ENCODE measurements at regions of chr6 and their contacts with region 1.

Region 1: DNA sequence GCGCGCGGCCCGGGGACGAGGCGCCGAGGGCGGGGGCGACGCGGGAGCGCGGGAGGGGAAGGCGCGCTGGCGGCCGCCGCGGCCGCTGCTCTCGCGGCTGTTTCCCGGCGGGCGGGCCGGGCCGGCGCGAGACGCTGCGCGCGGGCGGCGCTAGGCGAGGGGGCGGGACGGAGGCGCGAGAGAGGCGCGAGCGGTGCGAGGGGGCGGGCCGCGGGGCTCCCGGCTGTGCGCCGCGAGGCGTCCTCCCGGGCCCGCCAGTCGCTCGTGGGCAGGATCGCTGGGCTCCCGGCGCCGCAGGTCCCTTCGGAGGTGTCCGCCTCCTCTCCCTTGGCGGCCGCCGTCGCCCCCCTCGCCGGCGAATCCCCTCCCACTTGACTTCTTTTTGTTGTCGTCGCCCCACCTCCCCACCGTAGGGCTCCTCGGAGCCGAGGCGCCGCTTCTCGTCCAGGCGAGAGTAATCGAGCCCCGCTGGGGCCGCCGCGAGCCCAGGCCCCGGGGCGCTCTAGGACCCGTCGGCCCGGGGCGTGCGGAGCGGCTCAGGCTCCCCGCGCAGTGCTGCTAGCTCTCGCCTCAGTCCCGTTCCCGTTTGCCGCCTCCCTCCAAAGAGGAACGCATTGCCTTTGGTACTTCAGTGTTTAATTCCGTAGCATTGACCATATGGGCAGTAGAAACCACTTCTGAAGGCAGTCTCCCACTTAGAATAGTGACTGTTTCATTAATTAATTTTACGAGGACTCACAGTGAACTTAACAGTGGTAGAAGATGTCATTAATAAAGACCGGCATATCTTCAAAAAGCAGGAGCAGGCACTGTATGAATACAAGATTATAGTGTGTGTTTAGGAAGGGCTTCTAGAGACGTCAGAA is at the start of gene RANBP9:
- DNase-seq: peak; percentile 90
- H3K4me3 Mint-ChIP-seq: peak within 1 kb of the TSS; percentile 89
- H3K27ac Mint-ChIP-seq: peak within 1 kb of the TSS; percentile 99
- H3K4me1 Mint-ChIP-seq: peaks cover 52% of the 10 kb centered on the region
- H3K27me3 Mint-ChIP-seq: no peaks in the 10 kb centered on the region
- total RNA-seq, gene RANBP9: 63.7 to 66.2 TPM

Region 2: GRCh38 chr6:13624871-13625288 is 87.1 kb before region 1 on chr6:
- CTCF ChIA-PET with region 1: interaction called, 4 read pairs
- POLR2A ChIA-PET with region 1: interaction called, 4 read pairs
- intact Hi-C with region 1: loop called (anchors 2 kb)
- DNase-seq: peak; percentile 25
- H3K4me3 Mint-ChIP-seq: no peak overlapping the region
- H3K27ac Mint-ChIP-seq: peak overlapping the region; percentile 40
- H3K4me1 Mint-ChIP-seq: peaks cover 20% of the 10 kb centered on the region
- H3K27me3 Mint-ChIP-seq: no peaks in the 10 kb centered on the region

Region 3: GRCh38 chr6:13696226-13696625 is 15.7 kb before region 1 on chr6:
- CTCF ChIA-PET with region 1: interaction called, 13 read pairs
- POLR2A ChIA-PET with region 1: interaction called, 5 read pairs
- intact Hi-C with region 1: no loop called
- DNase-seq: no peak
- H3K4me3 Mint-ChIP-seq: no peak overlapping the region
- H3K27ac Mint-ChIP-seq: peak overlapping the region; percentile 40
- H3K4me1 Mint-ChIP-seq: peaks cover 66% of the 10 kb centered on the region
- H3K27me3 Mint-ChIP-seq: no peaks in the 10 kb centered on the region

Region 4: DNA sequence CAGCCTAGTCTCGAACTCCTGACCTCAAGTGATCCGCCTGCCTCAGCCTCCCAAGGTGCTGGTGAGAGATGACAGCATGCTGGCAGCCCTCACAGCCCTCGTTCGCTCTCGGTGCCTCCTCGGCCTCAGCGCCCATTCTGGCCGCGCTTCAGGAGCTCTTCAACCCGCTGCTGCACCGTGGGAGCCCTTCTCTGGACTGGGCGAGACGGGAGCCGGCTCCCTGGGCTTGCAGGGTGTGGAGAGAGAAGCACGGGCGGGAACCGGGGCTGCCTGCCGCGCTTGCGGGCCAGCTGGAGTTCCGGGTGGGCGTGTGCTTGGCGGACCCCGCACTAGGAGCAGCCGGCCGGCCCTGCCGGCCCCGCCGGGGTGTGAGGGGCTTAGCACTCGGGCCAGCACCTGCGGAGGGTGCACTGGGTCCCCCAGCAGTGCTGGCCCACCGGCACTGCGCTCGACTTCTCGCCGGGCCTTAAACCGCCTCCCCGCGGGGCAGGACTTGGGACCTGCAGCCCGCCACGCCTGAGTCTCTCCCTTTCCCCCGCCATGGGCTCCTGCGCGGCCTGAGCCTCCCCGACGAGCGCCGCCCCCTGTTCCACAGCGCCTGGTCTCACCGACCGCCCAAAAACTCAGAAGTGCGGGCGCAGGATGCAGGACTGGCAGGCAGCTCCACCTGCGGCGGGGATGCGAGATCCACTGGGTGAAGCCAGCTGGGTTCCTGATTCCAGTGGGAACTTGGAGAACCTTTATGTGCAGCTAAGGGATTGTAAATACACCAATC is 31.2 kb after region 1 on chr6:
- CTCF ChIA-PET with region 1: no interaction called
- POLR2A ChIA-PET with region 1: no interaction called
- intact Hi-C with region 1: loop called (anchors 1 kb)
- DNase-seq: no peak
- H3K4me3 Mint-ChIP-seq: peak overlapping the region; percentile 53
- H3K27ac Mint-ChIP-seq: no peak overlapping the region
- H3K4me1 Mint-ChIP-seq: peaks cover 14% of the 10 kb centered on the region
- H3K27me3 Mint-ChIP-seq: no peaks in the 10 kb centered on the region

Region 5: GRCh38 chr6:13787137-13787536 is 75.2 kb after region 1 on chr6:
- CTCF ChIA-PET with region 1: interaction called, 7 read pairs
- POLR2A ChIA-PET with region 1: no interaction called
- intact Hi-C with region 1: loop called (anchors 1 kb)
- DNase-seq: peak; percentile 63
- H3K4me3 Mint-ChIP-seq: no peak overlapping the region
- H3K27ac Mint-ChIP-seq: peak overlapping the region; percentile 68
- H3K4me1 Mint-ChIP-seq: peaks cover 34% of the 10 kb centered on the region
- H3K27me3 Mint-ChIP-seq: no peaks in the 10 kb centered on the region

Region 6: GRCh38 chr6:14117158-14118090 is 405.5 kb after region 1 on chr6 and contains the start of gene CD83:
- CTCF ChIA-PET with region 1: no interaction called
- POLR2A ChIA-PET with region 1: no interaction called
- intact Hi-C with region 1: loop called (anchors 10 kb)
- DNase-seq: peak; percentile 81
- H3K4me3 Mint-ChIP-seq: peak within 1 kb of the TSS; percentile 86
- H3K27ac Mint-ChIP-seq: peak within 1 kb of the TSS; percentile 76
- H3K4me1 Mint-ChIP-seq: peaks cover 37% of the 10 kb centered on the region
- H3K27me3 Mint-ChIP-seq: no peaks in the 10 kb centered on the region
- total RNA-seq, gene CD83: 21.8 to 23.0 TPM